ENCODE measurements at regions of chr19 and their contacts with region 1.

Region 1: GRCh38 chr19:8363803-8364771 is at the start of gene ANGPTL4:
- DNase-seq: peak; percentile 74 to 87
- H3K4me3 ChIP-seq: peak within 1 kb of the TSS; percentile 51 to 56
- H3K27ac ChIP-seq: peak within 1 kb of the TSS; percentile 73 to 86
- H3K4me1 ChIP-seq: peaks cover 8 to 74% (median 50%) of the 10 kb centered on the region in 4 donors
- H3K27me3 ChIP-seq: no peaks in the 10 kb centered on the region
- CTCF ChIP-seq: peak in 1 of 2 experiments; percentile 10

Region 2: DNA sequence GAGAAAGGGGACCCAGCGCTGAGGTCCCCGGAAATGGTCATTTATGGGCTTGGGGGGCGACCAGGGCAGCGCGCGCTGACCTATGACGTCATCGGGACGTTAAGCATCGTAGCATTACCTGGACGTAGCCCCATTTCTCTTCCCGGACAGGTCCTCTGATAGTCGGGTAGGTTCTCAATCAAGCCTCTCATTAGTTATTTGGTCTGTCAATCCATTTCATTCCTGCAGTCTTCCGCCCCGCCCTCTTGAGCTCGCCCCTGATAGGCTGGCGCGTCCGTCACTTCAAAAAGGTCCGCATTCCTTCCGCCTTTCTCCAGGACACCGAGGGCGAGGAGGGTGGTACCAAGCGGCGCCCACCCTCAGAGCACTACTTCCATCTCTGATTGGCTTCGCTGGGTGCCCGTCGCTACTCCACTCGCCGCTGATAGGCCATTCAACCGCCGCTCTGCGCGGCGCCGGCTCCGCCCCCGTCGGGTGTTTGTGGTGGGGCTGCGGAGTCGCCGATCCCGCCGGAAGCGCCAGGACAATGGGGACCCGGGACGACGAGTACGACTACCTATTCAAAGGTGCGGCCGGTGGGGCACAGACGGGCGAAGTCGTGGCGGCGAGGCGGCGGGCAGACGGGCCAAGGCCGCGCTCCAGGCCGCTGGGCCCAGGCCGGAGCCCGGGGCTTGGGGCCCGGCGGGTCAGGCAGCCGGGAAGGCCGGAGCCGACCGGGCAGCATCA is 26.0 kb after region 1 on chr19 and contains the start of gene RAB11B:
- intact Hi-C with region 1: loop called (anchors 2 kb)
- DNase-seq: peak; percentile 100
- H3K4me3 ChIP-seq: peak within 1 kb of the TSS; percentile 84 to 92
- H3K27ac ChIP-seq: peak within 1 kb of the TSS; percentile 99 to 100
- H3K4me1 ChIP-seq: peaks cover 4 to 49% (median 41%) of the 10 kb centered on the region in 4 donors
- H3K27me3 ChIP-seq: no peaks in the 10 kb centered on the region
- CTCF ChIP-seq: peak in 1 of 2 experiments; percentile 22

Region 3: GRCh38 chr19:8430650-8431049 is 66.6 kb after region 1 on chr19:
- intact Hi-C with region 1: no loop called
- DNase-seq: no peak
- H3K4me3 ChIP-seq: no peak overlapping the region
- H3K27ac ChIP-seq: no peak overlapping the region
- H3K4me1 ChIP-seq: peaks cover 0 to 17% (median 9%) of the 10 kb centered on the region in 4 donors
- H3K27me3 ChIP-seq: no peaks in the 10 kb centered on the region
- CTCF ChIP-seq: no peak